MCF 10A (cell line): ENCODE measurements at regions of chr3 and their contacts with region 1.

Region 1: GRCh38 chr3:43286115-43286840 is at the start of gene SNRK:
- DNase-seq: peak; percentile 77
- H3K4me3 Mint-ChIP-seq: peak within 1 kb of the TSS; percentile 91
- H3K27ac Mint-ChIP-seq: peak within 1 kb of the TSS; percentile 52
- H3K4me1 Mint-ChIP-seq: peaks cover 28% of the 10 kb centered on the region
- H3K27me3 Mint-ChIP-seq: peaks cover 10% of the 10 kb centered on the region
- CTCF ChIP-seq: peak; percentile 16
- total RNA-seq, gene SNRK: 16.6 and 18.0 TPM in 2 replicates

Region 2: DNA sequence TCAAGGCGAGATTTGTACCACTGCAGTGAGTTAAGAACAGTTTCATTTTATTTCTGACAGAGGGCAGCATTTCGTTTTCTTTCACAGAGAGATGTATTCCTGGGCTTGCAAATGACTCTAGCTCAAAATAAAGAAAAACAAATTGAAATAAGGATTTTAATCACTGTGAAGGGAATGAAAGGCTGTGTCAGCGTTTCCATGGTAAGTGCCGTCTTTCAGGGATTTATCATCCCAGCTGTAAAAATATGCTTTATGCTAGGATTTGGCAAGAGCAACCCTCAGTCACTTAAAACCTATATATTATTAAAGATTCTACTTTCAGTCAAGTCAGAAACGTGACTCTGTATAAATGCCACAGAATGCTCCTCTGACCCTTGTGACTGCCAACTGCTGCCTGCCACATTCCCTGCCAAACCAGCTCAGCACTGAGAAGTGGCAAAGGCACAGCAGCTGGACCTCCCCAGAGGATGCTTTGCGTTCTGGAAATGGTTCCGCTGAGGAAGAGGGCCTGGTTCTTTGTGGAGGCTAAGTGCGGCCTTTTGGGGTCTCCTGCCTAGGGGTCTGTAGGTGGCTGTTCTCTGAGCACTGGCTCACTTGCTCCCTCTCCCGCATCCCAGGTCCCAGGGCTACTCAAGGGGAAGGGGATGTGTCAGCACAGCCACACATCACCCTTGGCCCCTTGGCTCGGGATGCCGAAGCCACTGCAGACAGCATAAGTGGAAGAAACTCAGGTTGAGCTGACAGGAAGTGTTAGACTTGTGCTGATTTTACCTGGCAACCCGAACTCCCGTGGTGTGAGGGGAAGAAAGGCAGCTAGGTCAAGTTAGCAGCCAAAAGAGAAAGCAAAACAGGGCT is 123.8 kb before region 1 on chr3:
- CTCF ChIA-PET with region 1: interaction called, 5 read pairs
- POLR2A ChIA-PET with region 1: interaction called, 4 read pairs
- intact Hi-C with region 1: loop called (anchors 1 kb)
- DNase-seq: peak; percentile 49
- H3K4me3 Mint-ChIP-seq: no peak overlapping the region
- H3K27ac Mint-ChIP-seq: no peak overlapping the region
- H3K4me1 Mint-ChIP-seq: no peaks in the 10 kb centered on the region
- H3K27me3 Mint-ChIP-seq: no peaks in the 10 kb centered on the region
- CTCF ChIP-seq: peak; percentile 24

Region 3: DNA sequence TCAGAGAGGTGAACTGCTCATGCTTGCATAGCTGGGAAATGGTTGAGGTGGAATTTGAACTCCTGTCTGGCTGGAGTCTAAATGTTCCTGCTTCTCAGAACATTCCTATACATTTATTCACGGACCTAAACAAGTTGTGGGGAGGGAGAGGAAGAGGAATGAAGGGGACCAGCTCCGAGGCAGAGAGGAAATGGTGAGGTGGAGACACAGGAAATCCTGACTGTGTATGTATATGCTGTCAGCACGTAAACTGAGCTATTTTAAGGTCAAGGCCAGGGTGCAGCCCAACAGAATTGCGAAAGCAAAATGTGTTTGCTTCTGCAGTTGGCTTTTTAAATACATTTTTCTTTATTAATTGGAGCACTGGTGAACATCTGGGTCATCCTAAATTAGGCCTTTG is 106.3 kb before region 1 on chr3:
- CTCF ChIA-PET with region 1: interaction called, 3 read pairs
- POLR2A ChIA-PET with region 1: interaction called, 9 read pairs
- intact Hi-C with region 1: loop called (anchors 5 kb)
- DNase-seq: peak; percentile 85
- H3K4me3 Mint-ChIP-seq: peak overlapping the region; percentile 44
- H3K27ac Mint-ChIP-seq: peak overlapping the region; percentile 61
- H3K4me1 Mint-ChIP-seq: peaks cover 45% of the 10 kb centered on the region
- H3K27me3 Mint-ChIP-seq: no peaks in the 10 kb centered on the region
- CTCF ChIP-seq: no peak

Region 4: GRCh38 chr3:43215663-43216275 is 70.5 kb before region 1 on chr3:
- CTCF ChIA-PET with region 1: interaction called, 3 read pairs
- POLR2A ChIA-PET with region 1: interaction called, 10 read pairs
- intact Hi-C with region 1: no loop called
- DNase-seq: no peak
- H3K4me3 Mint-ChIP-seq: no peak overlapping the region
- H3K27ac Mint-ChIP-seq: no peak overlapping the region
- H3K4me1 Mint-ChIP-seq: peaks cover 20% of the 10 kb centered on the region
- H3K27me3 Mint-ChIP-seq: no peaks in the 10 kb centered on the region
- CTCF ChIP-seq: no peak

Region 5: DNA sequence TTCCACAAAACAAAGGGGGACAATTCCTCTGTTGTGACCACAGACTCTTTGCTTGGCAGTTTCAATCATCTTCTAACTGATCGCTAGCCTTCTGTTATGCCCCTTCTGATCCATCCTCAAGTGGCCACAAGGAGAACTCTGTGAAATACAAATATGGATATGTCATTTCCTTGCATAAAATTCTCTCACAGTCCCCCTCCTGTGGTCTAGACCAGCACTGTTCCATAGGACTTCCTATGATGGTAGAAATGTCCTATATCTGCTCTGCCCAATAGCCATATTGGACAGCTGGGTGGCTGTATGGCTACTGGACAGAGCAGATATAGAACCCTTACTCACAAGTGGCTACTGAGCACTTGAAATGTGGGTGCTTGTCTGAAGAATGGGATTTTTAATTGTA is 25.9 kb before region 1 on chr3:
- CTCF ChIA-PET with region 1: interaction called, 3 read pairs
- POLR2A ChIA-PET with region 1: interaction called, 22 read pairs
- intact Hi-C with region 1: no loop called
- DNase-seq: no peak
- H3K4me3 Mint-ChIP-seq: no peak overlapping the region
- H3K27ac Mint-ChIP-seq: no peak overlapping the region
- H3K4me1 Mint-ChIP-seq: peaks cover 32% of the 10 kb centered on the region
- H3K27me3 Mint-ChIP-seq: no peaks in the 10 kb centered on the region
- CTCF ChIP-seq: no peak

Region 6: GRCh38 chr3:43296565-43296964 is 10.3 kb after region 1 on chr3:
- CTCF ChIA-PET with region 1: interaction called, 4 read pairs
- POLR2A ChIA-PET with region 1: interaction called, 33 read pairs
- intact Hi-C with region 1: no loop called
- DNase-seq: peak; percentile 33
- H3K4me3 Mint-ChIP-seq: no peak overlapping the region
- H3K27ac Mint-ChIP-seq: no peak overlapping the region
- H3K4me1 Mint-ChIP-seq: peaks cover 31% of the 10 kb centered on the region
- H3K27me3 Mint-ChIP-seq: no peaks in the 10 kb centered on the region
- CTCF ChIP-seq: no peak

Region 7: DNA sequence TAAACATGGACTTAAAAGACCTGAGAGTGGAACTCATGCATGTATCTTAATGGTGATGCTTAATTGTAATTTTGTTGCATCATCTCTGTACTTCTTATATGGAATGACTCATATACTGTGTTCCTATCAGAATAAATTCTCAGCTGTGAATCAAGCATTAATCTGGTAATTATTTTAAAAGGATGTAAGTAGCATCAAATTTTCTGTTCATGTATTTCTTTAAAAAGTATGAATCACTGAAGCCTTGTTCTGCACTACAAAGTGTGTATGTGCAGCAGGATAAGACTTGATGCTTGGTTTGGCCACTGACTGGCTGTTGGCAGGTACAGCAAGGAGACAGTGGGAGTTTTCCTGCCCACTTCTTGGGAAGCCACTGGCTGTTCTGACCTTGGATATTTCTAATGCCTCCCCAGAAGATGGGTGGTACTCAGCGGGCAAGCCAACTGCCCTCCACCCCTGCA is 211.7 kb after region 1 on chr3:
- CTCF ChIA-PET with region 1: interaction called, 3 read pairs
- POLR2A ChIA-PET with region 1: no interaction called
- intact Hi-C with region 1: loop called (anchors 5 kb)
- DNase-seq: peak; percentile 28
- H3K4me3 Mint-ChIP-seq: no peak overlapping the region
- H3K27ac Mint-ChIP-seq: no peak overlapping the region
- H3K4me1 Mint-ChIP-seq: peaks cover 18% of the 10 kb centered on the region
- H3K27me3 Mint-ChIP-seq: no peaks in the 10 kb centered on the region
- CTCF ChIP-seq: no peak